CD14-positive monocyte (primary cell): ENCODE measurements at regions of chr15 and their contacts with region 1.

Region 1: GRCh38 chr15:100349696-100350433 is 8.1 kb upstream of the ADAMTS17 start:
- DNase-seq: peak; percentile 81 to 91 (median 89)
- H3K4me3 ChIP-seq: peak overlapping the region; percentile 79 to 94 (median 82)
- H3K4me3 Mint-ChIP-seq: peak overlapping the region; percentile 93 to 97
- H3K27ac ChIP-seq: peak overlapping the region; percentile 78 to 84
- H3K27ac Mint-ChIP-seq: peak overlapping the region; percentile 94 to 97 (median 97)
- H3K4me1 ChIP-seq: peaks cover 23 to 24% of the 10 kb centered on the region in 2 donors
- H3K4me1 Mint-ChIP-seq: peaks cover 19% of the 10 kb centered on the region
- H3K27me3 ChIP-seq: peaks cover 2 to 21% of the 10 kb centered on the region in 2 donors
- H3K27me3 Mint-ChIP-seq: peaks cover 4 to 19% (median 18%) of the 10 kb centered on the region in 3 donors
- CTCF ChIP-seq: peak; percentile 94

Region 2: GRCh38 chr15:99909592-99910295 is 440.1 kb before region 1 on chr15:
- intact Hi-C with region 1: loop called in 1 of 2 experiments (anchors 10 kb)
- DNase-seq: no peak
- H3K4me3 ChIP-seq: no peak overlapping the region
- H3K4me3 Mint-ChIP-seq: no peak overlapping the region
- H3K27ac ChIP-seq: no peak overlapping the region
- H3K27ac Mint-ChIP-seq: no peak overlapping the region
- H3K4me1 ChIP-seq: peaks cover 25 to 29% of the 10 kb centered on the region in 2 donors
- H3K4me1 Mint-ChIP-seq: peaks cover 18% of the 10 kb centered on the region
- H3K27me3 ChIP-seq: no peaks in the 10 kb centered on the region
- H3K27me3 Mint-ChIP-seq: peaks cover 0 to 3% (median 2%) of the 10 kb centered on the region in 3 donors
- CTCF ChIP-seq: no peak

Region 3: GRCh38 chr15:100111103-100112060 is 238.5 kb before region 1 on chr15:
- intact Hi-C with region 1: no loop called
- DNase-seq: no peak
- H3K4me3 ChIP-seq: no peak overlapping the region
- H3K4me3 Mint-ChIP-seq: no peak overlapping the region
- H3K27ac ChIP-seq: no peak overlapping the region
- H3K27ac Mint-ChIP-seq: peak overlapping the region in 1 of 7 donors; percentile 26
- H3K4me1 ChIP-seq: no peaks in the 10 kb centered on the region
- H3K4me1 Mint-ChIP-seq: peaks cover 10% of the 10 kb centered on the region
- H3K27me3 ChIP-seq: no peaks in the 10 kb centered on the region
- H3K27me3 Mint-ChIP-seq: peaks cover 0 to 12% (median 8%) of the 10 kb centered on the region in 3 donors
- CTCF ChIP-seq: no peak

Region 4: GRCh38 chr15:100572362-100572983 is 222.6 kb after region 1 on chr15:
- intact Hi-C with region 1: loop called in 1 of 2 experiments (anchors 5 kb)
- DNase-seq: peak in 2 of 3 donors; percentile 3 to 62
- H3K4me3 ChIP-seq: no peak overlapping the region
- H3K4me3 Mint-ChIP-seq: no peak overlapping the region
- H3K27ac ChIP-seq: no peak overlapping the region
- H3K27ac Mint-ChIP-seq: no peak overlapping the region
- H3K4me1 ChIP-seq: no peaks in the 10 kb centered on the region
- H3K4me1 Mint-ChIP-seq: no peaks in the 10 kb centered on the region
- H3K27me3 ChIP-seq: no peaks in the 10 kb centered on the region
- H3K27me3 Mint-ChIP-seq: no peaks in the 10 kb centered on the region
- CTCF ChIP-seq: peak; percentile 88

Region 5: GRCh38 chr15:100602064-100602822 is 252.4 kb after region 1 on chr15 and contains the starts of genes ASB7 and LINS1:
- intact Hi-C with region 1: loop called in 1 of 2 experiments (anchors 5 kb)
- DNase-seq: peak; percentile 100
- H3K4me3 ChIP-seq: peak within 1 kb of the TSS; percentile 89 to 97 (median 97)
- H3K4me3 Mint-ChIP-seq: no peak within 1 kb of the TSS
- H3K27ac ChIP-seq: peak within 1 kb of the TSS; percentile 68 to 86
- H3K27ac Mint-ChIP-seq: peak within 1 kb of the TSS in 6 of 7 donors; percentile 50 to 97 (median 92)
- H3K4me1 ChIP-seq: peaks cover 18 to 38% of the 10 kb centered on the region in 2 donors
- H3K4me1 Mint-ChIP-seq: peaks cover 26% of the 10 kb centered on the region
- H3K27me3 ChIP-seq: no peaks in the 10 kb centered on the region
- H3K27me3 Mint-ChIP-seq: peaks cover 0 to 1% (median 0%) of the 10 kb centered on the region in 3 donors
- CTCF ChIP-seq: no peak
- polyA plus RNA-seq, gene ASB7: 5.3 to 9.8 (median 7.6) TPM
- polyA plus RNA-seq, gene LINS1: 4.2 to 8.8 (median 7.6) TPM

Region 6: DNA sequence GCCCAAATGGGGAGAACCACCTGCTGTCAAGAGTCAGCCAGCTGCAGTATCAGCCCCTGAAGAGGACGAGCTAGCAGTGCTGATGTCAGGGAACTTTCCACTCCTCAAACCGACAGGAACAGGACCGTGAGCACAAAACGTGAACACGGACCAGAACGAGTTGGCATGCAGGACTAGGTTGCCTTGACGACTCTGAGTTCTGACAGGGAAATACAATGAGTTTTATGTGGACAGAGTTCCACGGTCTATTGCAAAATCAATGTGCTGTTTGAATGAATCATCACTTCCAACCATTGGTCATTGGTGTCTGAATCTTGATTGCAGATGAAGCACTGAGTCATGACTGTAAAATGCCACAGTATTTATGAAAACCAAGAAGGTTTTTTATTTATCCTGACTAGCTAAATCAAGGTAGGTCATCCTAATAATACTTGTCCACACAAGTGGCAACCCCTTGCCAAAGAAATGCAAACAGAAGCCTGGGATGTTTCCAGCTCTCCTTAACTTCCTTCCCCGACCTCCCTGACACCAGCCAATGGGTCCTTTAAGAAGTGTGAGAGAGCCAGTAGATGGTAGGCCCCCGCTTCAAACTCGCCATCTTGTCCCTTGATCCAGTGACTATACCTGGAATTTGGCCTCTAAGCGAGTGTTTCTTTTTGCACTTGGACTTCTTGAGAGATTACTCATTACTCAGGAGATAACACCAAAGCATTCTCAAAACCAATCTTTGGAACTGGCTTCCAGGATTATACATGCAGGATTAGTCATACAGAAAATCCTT is 372.1 kb after region 1 on chr15:
- intact Hi-C with region 1: loop called in 1 of 2 experiments (anchors 5 kb)
- DNase-seq: peak; percentile 87 to 96 (median 95)
- H3K4me3 ChIP-seq: peak overlapping the region in 1 of 3 experiments; percentile 38
- H3K4me3 Mint-ChIP-seq: peak overlapping the region in 1 of 2 donors; percentile 79
- H3K27ac ChIP-seq: peak overlapping the region; percentile 52 to 68
- H3K27ac Mint-ChIP-seq: peak overlapping the region; percentile 69 to 93 (median 84)
- H3K4me1 ChIP-seq: peaks cover 17 to 21% of the 10 kb centered on the region in 2 donors
- H3K4me1 Mint-ChIP-seq: peaks cover 26% of the 10 kb centered on the region
- H3K27me3 ChIP-seq: no peaks in the 10 kb centered on the region
- H3K27me3 Mint-ChIP-seq: peaks cover 8 to 17% (median 13%) of the 10 kb centered on the region in 3 donors
- CTCF ChIP-seq: no peak